Activated CD4-positive, alpha-beta memory T cell treated with anti-CD3 and anti-CD28 coated beads for 36 hours (primary cell): ENCODE measurements at regions of chr4 and their contacts with region 1.

Region 1: GRCh38 chr4:67545199-67546003 is at the start of gene CENPC:
- DNase-seq: peak; percentile 97
- H3K4me3 Mint-ChIP-seq: peak within 1 kb of the TSS; percentile 88
- H3K27ac Mint-ChIP-seq: peak within 1 kb of the TSS; percentile 92
- H3K4me1 Mint-ChIP-seq: peaks cover 37% of the 10 kb centered on the region
- H3K27me3 Mint-ChIP-seq: no peaks in the 10 kb centered on the region
- total RNA-seq, gene CENPC: 32.6 to 33.5 TPM

Region 2: DNA sequence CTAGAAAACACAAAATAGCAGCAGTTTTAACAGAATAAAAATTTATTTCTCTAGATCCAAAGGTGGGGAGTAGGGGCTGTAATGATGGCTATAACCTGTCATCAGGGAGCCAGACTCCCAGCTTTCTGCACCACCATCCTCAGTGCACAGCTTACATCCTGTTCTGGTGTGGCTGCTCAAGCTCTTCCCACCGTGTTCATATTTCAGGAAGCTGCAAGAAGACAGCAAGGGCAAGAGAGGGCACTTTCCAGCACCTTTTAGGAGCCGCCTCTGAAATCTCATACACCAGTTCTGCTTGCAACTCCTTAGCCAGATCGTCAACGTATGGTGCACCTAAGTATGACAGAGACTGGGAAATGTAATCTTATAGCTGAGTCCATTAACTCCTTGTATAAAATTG is 253.8 kb before region 1 on chr4:
- CTCF ChIA-PET with region 1: no interaction called
- POLR2A ChIA-PET with region 1: no interaction called
- intact Hi-C with region 1: no loop called
- DNase-seq: no peak
- H3K4me3 Mint-ChIP-seq: no peak overlapping the region
- H3K27ac Mint-ChIP-seq: no peak overlapping the region
- H3K4me1 Mint-ChIP-seq: no peaks in the 10 kb centered on the region
- H3K27me3 Mint-ChIP-seq: no peaks in the 10 kb centered on the region

Region 3: DNA sequence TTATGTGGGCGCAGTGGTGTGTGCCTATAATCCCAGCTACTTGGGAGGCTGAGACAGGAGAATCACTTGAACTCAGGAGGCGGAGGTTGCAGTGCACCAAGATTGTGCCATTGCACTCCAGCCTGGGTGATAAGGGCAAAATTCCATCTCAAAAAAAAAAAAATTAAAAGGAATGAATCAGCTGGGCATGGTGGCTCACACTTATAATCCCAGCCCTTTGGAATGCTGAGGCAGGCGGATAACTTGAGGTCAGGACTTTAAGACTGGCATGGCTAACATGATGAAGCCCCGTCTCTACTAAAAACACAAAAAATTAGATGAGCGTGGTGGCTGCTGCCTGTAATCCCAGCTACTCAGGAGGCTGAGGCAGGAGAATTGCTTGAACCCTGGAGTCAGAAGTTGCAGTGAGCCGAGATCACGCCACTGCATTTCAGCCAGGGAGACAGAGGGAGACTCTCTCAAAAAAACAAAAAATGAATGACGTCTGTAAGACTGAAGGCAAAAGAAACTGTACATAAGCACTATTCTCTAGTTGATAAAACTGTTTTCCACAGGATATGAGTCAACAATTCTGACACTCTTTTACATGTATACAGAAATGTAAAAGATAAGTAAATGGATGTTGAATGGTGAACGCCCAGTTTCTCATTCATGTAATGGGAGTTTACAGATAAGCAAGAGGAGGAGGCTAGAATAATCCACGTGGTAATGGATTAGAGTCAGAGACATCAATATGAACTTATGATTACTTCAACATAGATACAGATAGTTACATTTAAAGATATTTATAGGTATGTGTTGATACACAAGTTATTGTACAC is 22.3 kb before region 1 on chr4:
- CTCF ChIA-PET with region 1: no interaction called
- POLR2A ChIA-PET with region 1: interaction called, 3 read pairs
- intact Hi-C with region 1: loop called (anchors 1 kb)
- DNase-seq: peak; percentile 43
- H3K4me3 Mint-ChIP-seq: peak overlapping the region; percentile 26
- H3K27ac Mint-ChIP-seq: peak overlapping the region; percentile 94
- H3K4me1 Mint-ChIP-seq: peaks cover 67% of the 10 kb centered on the region
- H3K27me3 Mint-ChIP-seq: no peaks in the 10 kb centered on the region

Region 4: GRCh38 chr4:67581208-67581857 is 35.9 kb after region 1 on chr4:
- CTCF ChIA-PET with region 1: no interaction called
- POLR2A ChIA-PET with region 1: no interaction called
- intact Hi-C with region 1: loop called (anchors 1 kb)
- DNase-seq: no peak
- H3K4me3 Mint-ChIP-seq: peak overlapping the region; percentile 48
- H3K27ac Mint-ChIP-seq: peak overlapping the region; percentile 59
- H3K4me1 Mint-ChIP-seq: peaks cover 20% of the 10 kb centered on the region
- H3K27me3 Mint-ChIP-seq: no peaks in the 10 kb centered on the region

Region 5: GRCh38 chr4:67658302-67658701 is 112.9 kb after region 1 on chr4:
- CTCF ChIA-PET with region 1: no interaction called
- POLR2A ChIA-PET with region 1: no interaction called
- intact Hi-C with region 1: loop called (anchors 1 kb)
- DNase-seq: peak; percentile 63
- H3K4me3 Mint-ChIP-seq: no peak overlapping the region
- H3K27ac Mint-ChIP-seq: peak overlapping the region; percentile 63
- H3K4me1 Mint-ChIP-seq: peaks cover 24% of the 10 kb centered on the region
- H3K27me3 Mint-ChIP-seq: no peaks in the 10 kb centered on the region

Region 6: DNA sequence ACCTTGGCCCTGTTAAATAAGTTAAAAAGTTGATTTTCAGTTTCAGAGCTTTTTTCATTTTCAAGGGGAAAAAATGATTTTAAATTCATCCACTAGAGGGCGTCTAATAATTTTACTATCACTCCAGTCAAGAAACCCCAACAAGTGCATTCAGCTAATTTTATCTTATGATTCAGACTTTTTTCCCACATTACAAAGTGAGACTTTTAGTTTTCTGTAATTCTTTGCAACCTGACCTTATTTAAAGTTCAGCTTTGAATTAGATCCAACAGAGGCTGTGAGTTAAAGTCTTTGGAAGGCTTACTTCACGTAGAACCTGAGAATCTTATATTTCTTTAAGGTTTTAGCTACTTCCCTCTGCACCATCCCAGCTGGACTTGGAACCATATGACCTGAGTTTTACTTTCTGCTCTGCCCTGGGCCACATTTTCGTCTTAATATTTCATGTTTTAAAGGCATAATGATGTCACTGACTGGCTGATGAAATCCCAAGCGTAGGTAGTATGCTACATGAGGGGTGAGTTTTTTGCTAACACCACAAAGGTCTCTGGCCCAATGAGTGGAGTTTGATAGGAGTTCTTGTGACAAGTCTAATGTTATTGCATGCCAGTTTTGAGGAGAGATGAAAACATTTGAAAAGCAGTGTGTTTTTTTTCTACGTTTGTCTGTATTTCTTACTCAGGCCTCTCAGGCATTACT is 201.5 kb after region 1 on chr4:
- CTCF ChIA-PET with region 1: no interaction called
- POLR2A ChIA-PET with region 1: no interaction called
- intact Hi-C with region 1: loop called (anchors 5 kb)
- DNase-seq: no peak
- H3K4me3 Mint-ChIP-seq: no peak overlapping the region
- H3K27ac Mint-ChIP-seq: no peak overlapping the region
- H3K4me1 Mint-ChIP-seq: peaks cover 9% of the 10 kb centered on the region
- H3K27me3 Mint-ChIP-seq: no peaks in the 10 kb centered on the region

Region 7: GRCh38 chr4:68175562-68176155 is 630.3 kb after region 1 on chr4:
- CTCF ChIA-PET with region 1: interaction called, 4 read pairs
- POLR2A ChIA-PET with region 1: no interaction called
- intact Hi-C with region 1: loop called (anchors 1 kb)
- DNase-seq: peak; percentile 38
- H3K4me3 Mint-ChIP-seq: no peak overlapping the region
- H3K27ac Mint-ChIP-seq: no peak overlapping the region
- H3K4me1 Mint-ChIP-seq: no peaks in the 10 kb centered on the region
- H3K27me3 Mint-ChIP-seq: peaks cover 6% of the 10 kb centered on the region

Region 8: DNA sequence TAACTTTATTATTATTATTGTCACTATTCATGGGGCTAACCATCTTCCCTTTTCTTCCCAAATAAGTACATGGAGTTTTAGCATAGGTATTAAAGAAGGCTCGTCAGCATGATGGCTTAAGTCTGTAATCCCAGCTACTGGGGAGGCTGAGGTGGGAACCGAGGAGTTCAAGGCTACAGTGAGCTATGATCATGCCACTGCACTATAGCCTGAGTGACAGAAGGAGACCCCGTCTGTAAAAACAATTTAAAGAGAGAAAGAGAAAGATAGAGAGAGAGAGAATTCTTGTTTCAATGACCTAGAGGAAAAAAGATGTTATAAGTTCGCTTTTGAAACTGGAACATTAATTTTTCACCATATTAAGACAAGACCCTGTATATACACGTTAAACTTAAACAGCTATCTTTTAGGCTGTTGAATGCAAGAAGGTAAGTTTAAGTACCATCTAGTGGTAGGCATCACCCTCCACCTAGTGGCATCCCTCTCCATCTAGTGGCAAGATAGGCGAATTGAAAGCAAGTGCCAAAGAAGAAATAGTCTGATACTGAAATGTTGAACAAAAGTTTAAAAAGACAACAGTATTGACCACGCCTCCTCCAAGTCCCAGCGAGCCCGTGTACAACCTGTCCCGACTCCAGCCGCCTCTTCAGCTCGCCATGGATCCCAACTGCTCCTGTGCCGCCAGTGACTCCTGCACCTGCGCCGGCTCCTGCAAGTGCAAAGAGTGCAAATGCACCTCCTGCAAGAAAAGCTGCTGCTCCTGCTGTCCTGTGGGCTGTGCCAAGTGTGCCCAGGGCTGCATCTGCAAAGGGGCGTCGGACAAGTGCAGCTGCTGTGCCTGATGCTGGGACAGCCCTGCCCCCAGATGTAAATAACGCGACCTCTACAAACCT is 830.5 kb after region 1 on chr4:
- CTCF ChIA-PET with region 1: no interaction called
- POLR2A ChIA-PET with region 1: no interaction called
- intact Hi-C with region 1: loop called (anchors 10 kb)
- DNase-seq: peak; percentile 45
- H3K4me3 Mint-ChIP-seq: peak overlapping the region; percentile 51
- H3K27ac Mint-ChIP-seq: no peak overlapping the region
- H3K4me1 Mint-ChIP-seq: peaks cover 11% of the 10 kb centered on the region
- H3K27me3 Mint-ChIP-seq: peaks cover 2% of the 10 kb centered on the region